Heart right ventricle (tissue), 16 donors: ENCODE measurements at regions of chr4 and their contacts with region 1.

Region 1: GRCh38 chr4:121421594-121421993 is 40.8 kb upstream of the QRFPR start:
- DNase-seq: no peak
- ATAC-seq: no peak
- H3K4me3 ChIP-seq: peak overlapping the region in 7 of 10 donors; percentile 8 to 38 (median 25)
- H3K27ac ChIP-seq: no peak overlapping the region
- H3K4me1 ChIP-seq: peaks cover 0 to 11% (median 0%) of the 10 kb centered on the region in 9 donors
- H3K27me3 ChIP-seq: no peaks in the 10 kb centered on the region
- CTCF ChIP-seq: peak; percentile 21 to 65 (median 46)

Region 2: GRCh38 chr4:121370729-121371325 is 50.8 kb before region 1 on chr4:
- intact Hi-C with region 1: loop called in 9 of 10 experiments (anchors 1 to 10 kb)
- DNase-seq: peak in 1 of 2 donors; percentile 55
- ATAC-seq: peak in 4 of 8 donors; percentile 45 to 72 (median 58)
- H3K4me3 ChIP-seq: no peak overlapping the region
- H3K27ac ChIP-seq: no peak overlapping the region
- H3K4me1 ChIP-seq: peaks cover 0 to 11% (median 0%) of the 10 kb centered on the region in 9 donors
- H3K27me3 ChIP-seq: no peaks in the 10 kb centered on the region
- CTCF ChIP-seq: peak; percentile 39 to 81 (median 74)

Region 3: DNA sequence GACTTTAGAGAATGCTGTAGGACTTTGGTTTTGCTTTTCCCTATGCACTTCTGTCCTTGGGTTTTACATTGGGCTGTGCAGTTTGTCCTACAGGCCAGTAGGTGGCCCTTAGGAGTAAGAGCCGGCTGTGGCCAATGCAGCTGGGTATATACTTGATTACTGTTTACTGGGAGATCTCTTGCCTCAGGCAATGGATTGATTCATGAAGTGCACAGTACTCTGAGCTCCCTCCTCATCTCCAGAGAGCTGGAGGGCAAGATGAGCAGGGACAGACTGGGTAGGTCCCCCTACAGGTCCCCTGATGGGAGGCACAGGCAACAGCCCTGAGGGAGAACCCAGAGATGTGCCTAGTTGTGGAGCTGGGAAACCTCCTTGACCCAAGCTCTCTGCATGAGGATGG is 63.0 kb after region 1 on chr4:
- intact Hi-C with region 1: no loop called
- DNase-seq: no peak
- ATAC-seq: peak in 7 of 8 donors; percentile 53 to 87 (median 73)
- H3K4me3 ChIP-seq: no peak overlapping the region
- H3K27ac ChIP-seq: no peak overlapping the region
- H3K4me1 ChIP-seq: no peaks in the 10 kb centered on the region
- H3K27me3 ChIP-seq: no peaks in the 10 kb centered on the region
- CTCF ChIP-seq: peak; percentile 35 to 76 (median 63)